Activated T-helper 1 cell treated with anti-CD3 and anti-CD28 coated beads, Interleukin-12 subunit alpha, Interleukin-12 subunit beta, Interleukin-2, Interleukin-4 antibody, amounts not matched to agents 30 ng/mL and 10 ng/mL and 1 ng/mL, durations not matched to agents 14 hours and 24 hours and 36 hours (primary cell): ENCODE measurements at regions of chr6 and their contacts with region 1.

Region 1: DNA sequence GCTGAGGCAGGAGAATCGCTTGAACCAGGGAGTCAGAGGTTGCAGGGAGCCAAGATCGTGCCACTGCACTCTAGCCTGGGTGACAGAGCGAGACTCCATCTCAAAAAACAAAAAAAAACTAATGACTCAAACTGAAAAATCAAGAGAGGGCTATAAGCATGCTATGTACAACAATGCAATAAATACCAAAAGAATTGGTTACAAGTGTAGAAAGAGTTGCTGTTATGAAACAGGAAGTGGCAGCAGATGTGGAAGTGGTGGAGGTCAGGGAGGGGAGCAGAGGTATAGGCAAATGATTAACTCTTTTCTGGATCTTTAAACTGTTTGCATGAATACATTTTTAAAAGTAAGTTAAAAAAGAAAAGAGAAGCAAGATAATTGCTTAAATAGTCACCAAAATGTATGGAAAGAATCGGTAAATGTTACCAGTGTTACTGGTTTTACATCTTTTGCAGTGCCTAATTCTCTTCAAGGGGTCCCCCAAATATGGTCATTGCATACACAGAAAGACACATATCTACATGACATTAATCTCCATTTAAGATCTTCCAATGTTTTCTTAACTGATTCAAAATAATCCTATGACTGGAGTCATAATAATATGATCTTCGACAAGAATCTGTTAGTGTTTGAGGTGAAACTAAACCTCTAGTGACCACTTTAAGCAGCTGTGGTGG is 15.0 kb downstream of the CALHM6 start:
- DNase-seq: peak; percentile 54
- H3K4me3 Mint-ChIP-seq: peak overlapping the region; percentile 7
- H3K27ac Mint-ChIP-seq: peak overlapping the region; percentile 69
- H3K4me1 Mint-ChIP-seq: peaks cover 31% of the 10 kb centered on the region
- H3K27me3 Mint-ChIP-seq: peaks cover 11% of the 10 kb centered on the region

Region 2: DNA sequence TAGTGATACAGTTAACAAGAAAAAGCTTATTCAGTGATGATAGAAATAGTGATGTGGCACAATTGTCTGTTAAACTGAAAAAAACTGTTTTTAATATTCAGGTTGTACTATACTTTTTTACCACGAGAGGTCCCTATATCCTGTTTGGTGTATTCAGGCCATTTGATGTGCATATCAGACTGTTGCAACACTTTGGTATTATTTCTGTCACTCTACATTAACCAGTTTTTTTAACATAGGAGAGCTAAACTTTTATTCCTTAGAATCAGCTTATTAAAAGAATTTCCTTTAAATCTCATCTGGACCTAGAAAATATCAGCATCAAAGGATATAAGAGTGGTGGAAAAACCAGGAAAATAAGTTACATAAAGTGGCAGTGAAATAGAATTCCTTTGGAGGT is 259.1 kb before region 1 on chr6:
- intact Hi-C with region 1: no loop called
- DNase-seq: no peak
- H3K4me3 Mint-ChIP-seq: no peak overlapping the region
- H3K27ac Mint-ChIP-seq: no peak overlapping the region
- H3K4me1 Mint-ChIP-seq: no peaks in the 10 kb centered on the region
- H3K27me3 Mint-ChIP-seq: no peaks in the 10 kb centered on the region

Region 3: DNA sequence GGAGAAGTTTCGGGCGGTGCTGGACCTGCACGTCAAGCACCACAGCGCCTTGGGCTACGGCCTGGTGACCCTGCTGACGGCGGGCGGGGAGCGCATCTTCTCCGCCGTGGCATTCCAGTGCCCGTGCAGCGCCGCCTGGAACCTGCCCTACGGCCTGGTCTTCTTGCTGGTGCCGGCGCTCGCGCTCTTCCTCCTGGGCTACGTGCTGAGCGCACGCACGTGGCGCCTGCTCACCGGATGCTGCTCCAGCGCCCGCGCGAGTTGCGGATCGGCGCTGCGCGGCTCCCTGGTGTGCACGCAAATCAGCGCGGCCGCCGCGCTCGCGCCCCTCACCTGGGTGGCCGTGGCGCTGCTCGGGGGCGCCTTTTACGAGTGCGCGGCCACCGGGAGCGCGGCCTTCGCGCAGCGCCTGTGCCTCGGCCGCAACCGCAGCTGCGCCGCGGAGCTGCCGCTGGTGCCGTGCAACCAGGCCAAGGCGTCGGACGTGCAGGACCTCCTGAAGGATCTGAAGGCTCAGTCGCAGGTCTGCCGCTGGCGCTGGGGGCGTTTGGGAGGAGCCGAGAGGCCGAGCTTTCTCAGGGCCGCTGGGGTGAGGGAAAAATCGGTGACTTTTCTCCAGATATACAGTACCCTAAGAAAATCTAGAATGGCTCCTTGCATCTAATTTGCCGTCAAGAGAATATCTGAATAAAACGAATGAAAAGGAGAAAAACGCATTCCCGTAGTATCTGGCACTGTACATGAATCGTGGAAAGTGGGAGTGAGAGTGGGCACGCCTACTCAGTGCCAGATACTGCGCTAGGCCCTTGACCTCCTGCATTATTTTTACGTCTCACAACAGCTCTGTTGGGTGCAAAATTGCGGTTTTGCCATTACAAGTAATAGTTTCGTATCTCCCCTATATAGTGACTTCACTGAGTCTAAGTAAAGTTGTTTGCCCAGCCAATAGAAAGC is 13.9 kb before region 1 on chr6:
- intact Hi-C with region 1: loop called (anchors 1 kb)
- DNase-seq: peak; percentile 67
- H3K4me3 Mint-ChIP-seq: peak overlapping the region; percentile 87
- H3K27ac Mint-ChIP-seq: peak overlapping the region; percentile 87
- H3K4me1 Mint-ChIP-seq: peaks cover 89% of the 10 kb centered on the region
- H3K27me3 Mint-ChIP-seq: peaks cover 1% of the 10 kb centered on the region

Region 4: GRCh38 chr6:116570856-116571682 is 94.9 kb after region 1 on chr6 and contains the start of gene RWDD1:
- intact Hi-C with region 1: no loop called
- DNase-seq: peak; percentile 98
- H3K4me3 Mint-ChIP-seq: peak within 1 kb of the TSS; percentile 99
- H3K27ac Mint-ChIP-seq: peak within 1 kb of the TSS; percentile 97
- H3K4me1 Mint-ChIP-seq: peaks cover 54% of the 10 kb centered on the region
- H3K27me3 Mint-ChIP-seq: peaks cover 13% of the 10 kb centered on the region
- total RNA-seq, gene RWDD1: 41.4 and 41.5 TPM in 2 replicates

Region 5: GRCh38 chr6:117138920-117139319 is 662.8 kb after region 1 on chr6:
- intact Hi-C with region 1: no loop called
- DNase-seq: no peak
- H3K4me3 Mint-ChIP-seq: no peak overlapping the region
- H3K27ac Mint-ChIP-seq: no peak overlapping the region
- H3K4me1 Mint-ChIP-seq: no peaks in the 10 kb centered on the region
- H3K27me3 Mint-ChIP-seq: no peaks in the 10 kb centered on the region